ENCODE measurements at regions of chr15 and their contacts with region 1.

Region 1: GRCh38 chr15:36883713-36884517 is 216.4 kb downstream of the MEIS2 start:
- DNase-seq: peak; percentile 86
- H3K4me3 ChIP-seq: peak overlapping the region; percentile 14; the same call in 1 of the 2 replicates
- H3K4me3 Mint-ChIP-seq: peak overlapping the region; percentile 70
- H3K27ac Mint-ChIP-seq: no peak overlapping the region
- H3K4me1 ChIP-seq: peaks cover 17% of the 10 kb centered on the region
- H3K4me1 Mint-ChIP-seq: peaks cover 24% of the 10 kb centered on the region
- H3K27me3 ChIP-seq: no peaks in the 10 kb centered on the region; the same call in 1 of the 2 replicates
- H3K27me3 Mint-ChIP-seq: peaks cover 2% of the 10 kb centered on the region
- CTCF ChIP-seq: peak; percentile 82 to 86

Region 2: GRCh38 chr15:35519541-35520149 is 1364.3 kb before region 1 on chr15:
- CTCF ChIA-PET with region 1: no interaction called
- POLR2A ChIA-PET with region 1: no interaction called
- intact Hi-C with region 1: loop called (anchors 2 kb)
- DNase-seq: peak in 1 of 2 experiments; percentile 25
- H3K4me3 ChIP-seq: no peak overlapping the region
- H3K4me3 Mint-ChIP-seq: no peak overlapping the region
- H3K27ac Mint-ChIP-seq: no peak overlapping the region
- H3K4me1 ChIP-seq: no peaks in the 10 kb centered on the region; the same call in 1 of the 2 replicates
- H3K4me1 Mint-ChIP-seq: peaks cover 9% of the 10 kb centered on the region
- H3K27me3 ChIP-seq: no peaks in the 10 kb centered on the region
- H3K27me3 Mint-ChIP-seq: no peaks in the 10 kb centered on the region
- CTCF ChIP-seq: peak; percentile 30 to 58

Region 3: GRCh38 chr15:36970522-36970921 is 86.6 kb after region 1 on chr15:
- CTCF ChIA-PET with region 1: no interaction called
- POLR2A ChIA-PET with region 1: no interaction called
- intact Hi-C with region 1: loop called (anchors 5 kb)
- DNase-seq: peak; percentile 43 to 47
- H3K4me3 ChIP-seq: no peak overlapping the region
- H3K4me3 Mint-ChIP-seq: no peak overlapping the region
- H3K27ac Mint-ChIP-seq: peak overlapping the region; percentile 48
- H3K4me1 ChIP-seq: peaks cover 4% of the 10 kb centered on the region; the same call in 1 of the 2 replicates
- H3K4me1 Mint-ChIP-seq: peaks cover 7% of the 10 kb centered on the region
- H3K27me3 ChIP-seq: no peaks in the 10 kb centered on the region; the same call in 1 of the 2 replicates
- H3K27me3 Mint-ChIP-seq: peaks cover 4% of the 10 kb centered on the region
- CTCF ChIP-seq: no peak

Region 4: DNA sequence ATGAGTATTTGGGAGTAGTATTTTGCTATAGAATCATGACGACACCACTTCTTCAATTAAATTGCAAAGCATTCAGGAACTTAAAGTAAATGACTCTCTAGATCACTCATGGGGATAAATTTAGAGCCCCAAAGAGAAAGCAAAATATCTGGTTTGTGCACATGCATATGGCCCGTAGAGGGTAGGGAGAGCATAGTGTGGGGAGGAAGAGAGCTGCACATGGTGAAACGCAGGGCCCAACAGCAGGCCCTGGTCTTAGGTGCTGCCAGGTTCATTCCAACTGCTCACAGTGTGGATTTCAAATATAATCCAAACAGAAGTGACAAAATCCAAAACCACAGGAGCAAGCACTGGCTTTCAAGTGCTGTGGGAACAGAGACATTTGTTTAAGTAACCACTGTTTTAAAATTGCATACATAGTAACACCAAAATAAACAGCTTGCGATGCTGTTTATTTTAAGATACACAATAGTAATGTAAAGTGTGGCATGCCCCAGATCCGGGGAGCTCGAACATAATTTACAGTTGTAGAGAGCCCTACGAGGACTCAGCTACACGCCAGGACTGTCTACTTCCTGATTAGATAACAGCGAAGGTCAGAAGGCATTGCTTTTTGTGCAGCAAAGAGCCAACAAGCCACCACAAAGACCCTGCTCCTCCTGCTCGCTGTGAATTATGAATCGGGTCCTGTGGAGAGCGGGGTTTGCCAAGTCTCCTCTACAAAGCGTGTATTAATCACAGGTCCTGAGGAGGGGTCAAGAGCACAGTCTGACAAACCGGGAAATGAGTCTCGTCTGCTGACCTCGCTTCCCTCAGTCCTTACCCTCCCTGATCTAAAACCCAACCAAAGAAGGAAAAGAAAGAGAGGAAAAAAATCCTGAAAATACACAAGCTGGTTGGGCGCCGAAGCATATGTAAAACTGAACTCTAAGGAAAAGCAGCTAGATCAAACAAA is 135.8 kb after region 1 on chr15:
- CTCF ChIA-PET with region 1: no interaction called
- POLR2A ChIA-PET with region 1: no interaction called
- intact Hi-C with region 1: no loop called
- DNase-seq: peak in 1 of 2 experiments; percentile 20
- H3K4me3 ChIP-seq: no peak overlapping the region
- H3K4me3 Mint-ChIP-seq: peak overlapping the region; percentile 63
- H3K27ac Mint-ChIP-seq: peak overlapping the region; percentile 83
- H3K4me1 ChIP-seq: peaks cover 50% of the 10 kb centered on the region
- H3K4me1 Mint-ChIP-seq: peaks cover 33% of the 10 kb centered on the region
- H3K27me3 ChIP-seq: no peaks in the 10 kb centered on the region
- H3K27me3 Mint-ChIP-seq: no peaks in the 10 kb centered on the region
- CTCF ChIP-seq: no peak

Region 5: GRCh38 chr15:37100109-37100965 is 216.4 kb after region 1 on chr15 and contains the start of gene MEIS2:
- CTCF ChIA-PET with region 1: interaction called, 4 read pairs
- POLR2A ChIA-PET with region 1: no interaction called
- intact Hi-C with region 1: loop called (anchors 1 kb)
- DNase-seq: peak; percentile 92 to 96
- H3K4me3 ChIP-seq: peak within 1 kb of the TSS; percentile 89
- H3K4me3 Mint-ChIP-seq: peak within 1 kb of the TSS; percentile 90
- H3K27ac Mint-ChIP-seq: peak within 1 kb of the TSS; percentile 91
- H3K4me1 ChIP-seq: peaks cover 5% of the 10 kb centered on the region; the same call in 1 of the 2 replicates
- H3K4me1 Mint-ChIP-seq: peaks cover 17% of the 10 kb centered on the region
- H3K27me3 ChIP-seq: no peaks in the 10 kb centered on the region
- H3K27me3 Mint-ChIP-seq: no peaks in the 10 kb centered on the region
- CTCF ChIP-seq: no peak
- total RNA-seq, gene MEIS2: 28.5 and 28.7 TPM in 2 replicates

Region 6: DNA sequence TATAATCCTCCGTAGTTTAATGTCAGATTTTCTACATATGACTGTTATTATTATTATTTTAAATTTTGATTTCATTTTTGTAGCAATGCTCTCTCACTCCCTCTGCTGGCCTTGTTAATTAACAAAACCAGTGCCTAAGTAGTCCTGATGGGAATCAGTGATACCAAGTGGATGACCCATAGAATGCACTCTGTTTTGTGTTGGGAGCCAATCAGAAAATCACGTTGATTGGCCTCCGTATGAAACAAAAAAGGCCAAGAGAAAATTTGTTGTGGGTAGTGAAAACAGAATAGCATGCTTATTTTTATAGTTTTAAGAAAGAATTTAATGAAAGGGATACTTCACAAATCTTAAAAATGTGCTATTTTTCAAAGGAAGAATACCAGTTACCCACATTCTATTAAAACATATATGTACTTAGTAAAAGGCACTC is 250.8 kb after region 1 on chr15:
- CTCF ChIA-PET with region 1: interaction called, 4 read pairs
- POLR2A ChIA-PET with region 1: no interaction called
- intact Hi-C with region 1: loop called (anchors 1 kb)
- DNase-seq: peak in 1 of 2 experiments; percentile 43
- H3K4me3 ChIP-seq: no peak overlapping the region
- H3K4me3 Mint-ChIP-seq: no peak overlapping the region
- H3K27ac Mint-ChIP-seq: no peak overlapping the region
- H3K4me1 ChIP-seq: peaks cover 12% of the 10 kb centered on the region; the same call in 1 of the 2 replicates
- H3K4me1 Mint-ChIP-seq: peaks cover 15% of the 10 kb centered on the region
- H3K27me3 ChIP-seq: no peaks in the 10 kb centered on the region
- H3K27me3 Mint-ChIP-seq: no peaks in the 10 kb centered on the region
- CTCF ChIP-seq: peak; percentile 51 to 67